Upper lobe of right lung (tissue), 1 donor: ENCODE measurements at regions of chr17 and their contacts with region 1.

Region 1: GRCh38 chr17:11638700-11639265 is 40.5 kb downstream of the DNAH9 start:
- DNase-seq: no peak
- ATAC-seq: no peak
- H3K4me3 ChIP-seq: no peak overlapping the region
- H3K27ac ChIP-seq: no peak overlapping the region
- H3K4me1 ChIP-seq: no peaks in the 10 kb centered on the region
- H3K27me3 ChIP-seq: no peaks in the 10 kb centered on the region
- CTCF ChIP-seq: no peak

Region 2: DNA sequence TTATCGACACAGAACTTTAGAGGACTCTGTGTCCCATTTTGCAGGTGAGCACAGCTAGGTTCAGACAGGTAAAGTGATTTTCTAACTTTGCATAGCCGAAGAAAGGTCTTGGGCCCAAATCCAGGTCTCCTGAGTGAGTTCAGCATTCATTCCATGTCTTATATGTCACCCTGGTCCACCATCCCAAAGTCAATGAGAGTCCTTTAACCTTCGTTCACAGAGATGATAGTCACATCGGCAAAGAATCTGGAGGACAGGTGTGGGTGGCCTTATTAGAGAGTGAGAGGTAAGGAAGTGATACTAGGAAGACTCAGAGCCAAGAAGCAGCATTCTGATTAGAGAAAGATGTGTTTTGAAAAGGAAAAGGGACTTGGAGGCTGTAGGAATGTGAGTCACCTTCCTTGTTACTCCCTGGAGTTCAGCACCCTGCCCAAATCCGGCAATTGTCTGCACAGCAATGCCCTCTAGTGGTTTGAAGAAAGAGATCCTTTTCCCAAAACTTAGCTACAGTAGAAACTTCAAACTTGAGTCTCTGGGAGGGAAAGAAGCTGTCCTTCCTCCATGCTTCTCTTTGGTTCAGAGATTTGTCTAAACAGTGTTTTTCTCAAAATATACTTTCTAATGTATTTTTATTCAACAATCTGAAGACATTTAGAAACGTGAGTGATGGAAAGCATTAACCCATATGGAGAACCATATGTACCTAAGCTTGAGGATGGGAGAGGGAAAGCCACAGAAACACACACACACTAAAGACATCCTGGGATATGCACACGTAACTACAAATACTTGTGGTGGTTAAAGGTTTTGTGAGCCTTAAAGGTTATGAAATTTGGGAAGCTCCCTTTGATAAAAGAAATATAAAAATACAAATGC is 494.2 kb before region 1 on chr17:
- intact Hi-C with region 1: loop called (anchors 10 kb)
- DNase-seq: no peak
- ATAC-seq: peak; percentile 80
- H3K4me3 ChIP-seq: no peak overlapping the region
- H3K27ac ChIP-seq: no peak overlapping the region
- H3K4me1 ChIP-seq: no peaks in the 10 kb centered on the region
- H3K27me3 ChIP-seq: no peaks in the 10 kb centered on the region
- CTCF ChIP-seq: peak; percentile 59